Prostate gland (tissue), 2 donors: ENCODE measurements at regions of chr15 and their contacts with region 1.

Region 1: GRCh38 chr15:81375461-81375860 is 1.4 kb upstream of the TMC3 start:
- DNase-seq: no peak
- H3K4me3 ChIP-seq: no peak overlapping the region
- H3K27ac ChIP-seq: no peak overlapping the region
- H3K4me1 ChIP-seq: no peaks in the 10 kb centered on the region
- H3K27me3 ChIP-seq: no peaks in the 10 kb centered on the region
- CTCF ChIP-seq: no peak
- POLR2A ChIP-seq: no peak

Region 2: DNA sequence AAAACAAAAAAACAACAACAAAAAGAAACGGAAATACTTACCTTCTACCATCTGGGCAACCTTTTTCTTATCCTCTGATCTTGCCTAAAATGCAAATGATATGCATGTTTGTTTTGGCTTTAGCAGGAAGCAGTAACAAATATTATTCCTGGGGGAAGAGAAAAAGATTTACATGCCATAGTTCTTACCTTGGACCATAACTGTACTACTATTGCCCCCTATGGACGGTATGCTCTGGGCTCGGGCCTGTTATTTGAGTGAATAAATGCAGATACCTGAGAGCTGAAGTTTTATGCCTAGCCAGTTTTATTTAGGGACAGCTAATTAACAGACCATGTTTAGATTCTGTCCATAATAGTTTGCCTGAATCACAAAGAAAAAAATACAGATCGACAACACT is 38.9 kb before region 1 on chr15:
- intact Hi-C with region 1: loop called (anchors 5 kb)
- DNase-seq: no peak
- H3K4me3 ChIP-seq: no peak overlapping the region
- H3K27ac ChIP-seq: no peak overlapping the region
- H3K4me1 ChIP-seq: peaks cover 4% of the 10 kb centered on the region
- H3K27me3 ChIP-seq: no peaks in the 10 kb centered on the region
- CTCF ChIP-seq: no peak
- POLR2A ChIP-seq: no peak